ENCODE measurements at regions of chr9 and their contacts with region 1.

Region 1: DNA sequence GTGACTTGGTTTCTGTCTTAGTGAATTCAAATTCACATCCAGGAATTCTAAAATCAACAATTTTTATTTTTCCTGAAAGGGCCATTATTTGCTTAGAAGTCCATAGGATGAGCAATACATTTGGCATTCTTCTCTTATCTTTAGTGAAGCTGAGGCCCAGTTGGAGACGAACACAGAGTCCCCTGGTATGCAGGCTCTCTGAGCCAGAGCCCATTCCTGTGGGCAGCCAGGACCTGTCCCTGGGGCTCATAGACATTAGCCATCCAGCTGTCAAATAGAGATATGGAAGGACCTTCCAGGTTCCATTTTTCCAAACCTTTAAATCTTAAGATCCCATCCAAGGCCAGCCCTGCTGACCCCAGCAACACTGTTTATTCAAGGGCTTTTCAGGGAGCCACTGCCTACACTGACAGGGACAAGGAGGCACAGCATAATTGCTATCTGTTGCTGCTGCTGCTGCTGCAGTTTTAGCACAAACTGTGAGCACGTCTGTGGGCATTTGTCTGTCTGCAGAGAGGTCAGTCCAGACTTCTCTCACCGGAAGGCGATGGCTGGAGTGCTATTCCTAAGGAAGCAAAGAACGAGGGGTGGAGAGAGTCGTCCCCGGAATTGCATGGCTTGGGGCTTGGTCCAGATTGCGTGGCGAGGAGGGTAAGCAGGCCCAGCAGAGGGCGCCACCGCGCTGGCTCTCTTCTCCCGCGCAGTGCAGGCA is 639.0 kb downstream of the CCDC171 start:
- DNase-seq: peak; percentile 76 to 81
- ATAC-seq: peak; percentile 94 to 98 (median 96)
- H3K4me3 ChIP-seq: peak overlapping the region in 1 of 10 donors; percentile 3
- H3K27ac ChIP-seq: peak overlapping the region in 4 of 10 donors; percentile 4 to 51 (median 43)
- H3K4me1 ChIP-seq: peaks cover 0 to 18% (median 6%) of the 10 kb centered on the region in 9 donors
- H3K27me3 ChIP-seq: no peaks in the 10 kb centered on the region
- CTCF ChIP-seq: peak; percentile 39 to 86 (median 81)

Region 2: GRCh38 chr9:15697446-15697851 is 494.4 kb before region 1 on chr9:
- intact Hi-C with region 1: no loop called
- DNase-seq: no peak
- ATAC-seq: no peak
- H3K4me3 ChIP-seq: no peak overlapping the region
- H3K27ac ChIP-seq: no peak overlapping the region
- H3K4me1 ChIP-seq: no peaks in the 10 kb centered on the region
- H3K27me3 ChIP-seq: no peaks in the 10 kb centered on the region
- CTCF ChIP-seq: no peak

Region 3: GRCh38 chr9:16417161-16417560 is 225.3 kb after region 1 on chr9:
- intact Hi-C with region 1: loop called in 1 of 10 experiments (anchors 10 kb)
- DNase-seq: no peak
- ATAC-seq: no peak
- H3K4me3 ChIP-seq: no peak overlapping the region
- H3K27ac ChIP-seq: peak overlapping the region in 5 of 10 donors; percentile 14 to 52 (median 43)
- H3K4me1 ChIP-seq: peaks cover 0 to 15% (median 0%) of the 10 kb centered on the region in 9 donors
- H3K27me3 ChIP-seq: peaks cover 0 to 8% (median 6%) of the 10 kb centered on the region in 7 donors
- CTCF ChIP-seq: no peak

Region 4: DNA sequence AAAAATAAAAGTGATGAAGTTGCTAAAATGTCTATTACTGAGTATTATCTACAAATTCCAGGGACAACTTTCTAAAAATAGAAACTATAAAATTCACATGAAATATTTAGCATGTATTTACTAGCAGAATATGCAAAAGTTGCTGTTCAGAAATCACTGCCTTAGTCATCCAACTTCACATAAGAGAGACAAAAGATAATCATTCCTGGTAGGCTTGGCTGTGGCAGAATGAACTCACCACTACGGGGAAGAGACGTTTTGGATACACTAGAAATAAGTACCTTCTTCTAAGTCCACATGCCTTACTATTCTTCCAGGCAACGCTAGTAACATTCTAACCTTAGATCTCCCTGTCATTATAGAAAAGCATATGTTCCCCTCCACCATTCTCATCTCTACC is 406.5 kb after region 1 on chr9:
- intact Hi-C with region 1: loop called in 1 of 10 experiments (anchors 10 kb)
- DNase-seq: no peak
- ATAC-seq: no peak
- H3K4me3 ChIP-seq: no peak overlapping the region
- H3K27ac ChIP-seq: no peak overlapping the region
- H3K4me1 ChIP-seq: peaks cover 0 to 11% (median 0%) of the 10 kb centered on the region in 9 donors
- H3K27me3 ChIP-seq: peaks cover 0 to 5% (median 0%) of the 10 kb centered on the region in 7 donors
- CTCF ChIP-seq: no peak

Region 5: GRCh38 chr9:16726718-16727451 is 535.0 kb after region 1 on chr9:
- intact Hi-C with region 1: loop called in 1 of 10 experiments (anchors 10 kb)
- DNase-seq: peak; percentile 47 to 71
- ATAC-seq: peak; percentile 83 to 94 (median 88)
- H3K4me3 ChIP-seq: peak overlapping the region; percentile 41 to 67 (median 58)
- H3K27ac ChIP-seq: peak overlapping the region; percentile 63 to 92 (median 80)
- H3K4me1 ChIP-seq: peaks cover 0 to 15% (median 4%) of the 10 kb centered on the region in 9 donors
- H3K27me3 ChIP-seq: peaks cover 0 to 62% (median 42%) of the 10 kb centered on the region in 7 donors
- CTCF ChIP-seq: no peak

Region 6: GRCh38 chr9:16834817-16835216 is 643.0 kb after region 1 on chr9:
- intact Hi-C with region 1: no loop called
- DNase-seq: no peak
- ATAC-seq: no peak
- H3K4me3 ChIP-seq: no peak overlapping the region
- H3K27ac ChIP-seq: no peak overlapping the region
- H3K4me1 ChIP-seq: peaks cover 0 to 8% (median 0%) of the 10 kb centered on the region in 9 donors
- H3K27me3 ChIP-seq: peaks cover 0 to 3% (median 0%) of the 10 kb centered on the region in 7 donors
- CTCF ChIP-seq: no peak

Measured in heart right ventricle (tissue), 16 donors.